Activated naive CD4-positive, alpha-beta T cell treated with anti-CD3 and anti-CD28 coated beads for 36 hours (primary cell): ENCODE measurements at regions of chr1 and their contacts with region 1.

Region 1: GRCh38 chr1:109239580-109240095 is 9.7 kb upstream of the CELSR2 start:
- DNase-seq: peak; percentile 47
- H3K4me3 Mint-ChIP-seq: no peak overlapping the region
- H3K27ac Mint-ChIP-seq: peak overlapping the region; percentile 10
- H3K4me1 Mint-ChIP-seq: peaks cover 17% of the 10 kb centered on the region
- H3K27me3 Mint-ChIP-seq: peaks cover 2% of the 10 kb centered on the region

Region 2: DNA sequence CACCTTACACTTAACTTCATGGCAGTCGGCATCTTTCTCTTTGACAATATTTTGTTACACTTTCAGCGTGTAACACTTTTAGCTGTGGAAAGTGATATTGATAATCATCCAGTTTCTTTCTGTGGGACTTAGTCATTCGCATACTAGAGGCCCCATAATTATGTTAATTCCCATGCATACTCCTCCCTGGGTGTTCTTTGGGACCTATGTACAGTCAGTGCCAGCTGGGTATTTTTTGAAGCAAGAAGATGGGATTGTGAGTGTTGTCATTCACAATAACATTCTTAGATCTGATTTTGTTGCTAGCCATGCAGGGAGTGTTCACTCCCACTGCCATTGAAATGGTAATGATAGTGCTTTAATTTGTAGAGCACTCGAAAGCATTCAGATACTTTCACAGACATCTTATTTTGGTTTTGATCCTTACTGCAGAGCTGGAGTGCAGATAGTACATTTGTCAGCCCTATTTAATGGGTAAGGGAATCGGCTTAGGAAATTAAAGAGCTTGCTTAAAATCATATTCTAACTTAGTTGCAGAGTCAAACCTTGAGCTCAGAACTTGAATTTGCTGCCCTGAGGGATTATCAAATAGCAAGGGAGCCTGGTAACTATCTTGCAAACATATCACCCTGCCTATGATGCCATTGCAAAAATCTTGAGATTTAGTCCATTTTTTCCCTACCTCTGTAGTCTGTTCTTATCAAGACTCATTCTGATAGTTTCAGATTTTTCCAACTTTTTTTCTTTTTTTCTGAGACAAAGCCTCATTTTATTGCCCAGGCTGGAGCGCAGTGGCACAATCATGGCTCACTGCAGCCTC is 14.2 kb before region 1 on chr1:
- CTCF ChIA-PET with region 1: interaction called, 7 read pairs
- intact Hi-C with region 1: loop called (anchors 2 kb)
- DNase-seq: no peak
- H3K4me3 Mint-ChIP-seq: no peak overlapping the region
- H3K27ac Mint-ChIP-seq: no peak overlapping the region
- H3K4me1 Mint-ChIP-seq: peaks cover 41% of the 10 kb centered on the region
- H3K27me3 Mint-ChIP-seq: no peaks in the 10 kb centered on the region

Region 3: DNA sequence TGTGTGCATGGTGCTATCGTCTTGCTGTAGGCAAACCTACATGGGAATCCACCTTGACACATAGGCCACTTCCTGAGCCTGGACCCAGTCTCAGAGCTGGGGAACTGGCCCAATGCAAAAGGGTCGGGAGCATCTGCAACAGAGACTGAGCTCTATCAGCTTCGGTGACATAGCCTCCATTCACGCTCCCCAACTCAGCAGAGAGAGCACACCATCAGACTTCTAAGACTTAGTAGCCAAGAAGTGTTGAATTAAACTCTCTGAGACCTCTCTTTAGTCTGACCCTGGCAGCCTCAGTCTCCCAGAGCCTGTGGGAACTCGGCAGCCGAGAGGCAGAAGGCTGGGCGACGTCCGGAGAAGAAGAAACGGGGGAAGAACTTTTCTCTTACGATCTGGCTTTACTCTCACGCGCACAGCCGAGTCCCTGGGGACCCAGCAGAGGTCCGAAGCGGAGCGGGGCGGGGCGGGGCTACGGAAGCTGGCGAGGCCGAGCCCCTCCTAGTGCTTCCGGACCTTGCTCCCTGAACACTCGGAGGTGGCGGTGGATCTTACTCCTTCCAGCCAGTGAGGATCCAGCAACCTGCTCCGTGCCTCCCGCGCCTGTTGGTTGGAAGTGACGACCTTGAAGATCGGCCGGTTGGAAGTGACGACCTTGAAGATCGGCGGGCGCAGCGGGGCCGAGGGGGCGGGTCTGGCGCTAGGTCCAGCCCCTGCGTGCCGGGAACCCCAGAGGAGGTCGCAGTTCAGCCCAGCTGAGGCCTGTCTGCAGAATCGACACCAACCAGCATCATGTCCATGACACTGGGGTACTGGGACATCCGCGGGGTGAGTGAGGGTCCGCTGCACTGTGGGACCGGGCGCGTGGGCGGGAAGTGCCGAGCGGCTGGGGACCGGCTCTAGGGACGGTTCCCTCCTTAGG is 416.2 kb after region 1 on chr1 and contains the start of gene GSTM4:
- CTCF ChIA-PET with region 1: no interaction called
- intact Hi-C with region 1: no loop called
- DNase-seq: peak; percentile 69
- H3K4me3 Mint-ChIP-seq: peak within 1 kb of the TSS; percentile 82
- H3K27ac Mint-ChIP-seq: peak within 1 kb of the TSS; percentile 28
- H3K4me1 Mint-ChIP-seq: peaks cover 15% of the 10 kb centered on the region
- H3K27me3 Mint-ChIP-seq: peaks cover 10% of the 10 kb centered on the region
- total RNA-seq, gene GSTM4: 8.8 to 9.9 TPM